ENCODE measurements at regions of chr20 and their contacts with region 1.

Region 1: DNA sequence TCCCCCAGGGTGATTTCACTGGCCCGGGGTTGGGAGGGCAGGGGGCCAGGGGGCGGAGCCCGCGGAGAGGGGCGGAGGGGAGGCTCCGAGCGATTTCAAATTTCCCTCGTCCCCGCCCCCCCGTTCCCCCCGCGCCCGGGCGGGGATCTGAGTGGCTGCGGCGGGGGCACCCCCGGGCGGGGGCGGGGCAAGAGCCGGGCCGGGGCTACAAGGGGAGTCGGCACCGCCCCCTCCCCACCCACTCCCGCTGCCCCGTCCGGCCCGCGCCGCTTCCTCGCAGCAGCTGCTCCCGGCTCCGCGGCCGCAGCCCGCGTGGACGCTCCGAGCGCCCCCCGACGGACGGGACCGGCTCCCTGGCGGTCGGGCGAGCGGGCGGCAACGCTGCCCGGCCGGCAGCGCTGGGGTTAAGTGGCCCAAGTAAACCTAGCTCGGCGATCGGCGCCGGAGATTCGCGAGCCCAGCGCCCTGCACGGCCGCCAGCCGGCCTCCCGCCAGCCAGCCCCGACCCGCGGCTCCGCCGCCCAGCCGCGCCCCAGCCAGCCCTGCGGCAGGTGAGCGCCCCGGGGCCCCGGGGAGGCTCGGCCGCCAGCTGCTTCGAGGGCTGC is at the start of gene DNMT3B:
- DNase-seq: peak; percentile 31 to 81 (median 66)
- ATAC-seq: peak; percentile 76
- H3K4me3 ChIP-seq: peak within 1 kb of the TSS; percentile 67
- H3K4me3 Mint-ChIP-seq: peak within 1 kb of the TSS; percentile 89
- H3K27ac ChIP-seq: no peak within 1 kb of the TSS
- H3K27ac Mint-ChIP-seq: no peak within 1 kb of the TSS
- H3K4me1 ChIP-seq: peaks cover 20% of the 10 kb centered on the region
- H3K4me1 Mint-ChIP-seq: peaks cover 13% of the 10 kb centered on the region
- H3K27me3 ChIP-seq: no peaks in the 10 kb centered on the region
- H3K27me3 Mint-ChIP-seq: no peaks in the 10 kb centered on the region
- CTCF ChIP-seq: no peak
- total RNA-seq, gene DNMT3B: 0.28 to 0.33 TPM

Region 2: GRCh38 chr20:32737371-32738223 is 24.7 kb before region 1 on chr20:
- CTCF ChIA-PET with region 1: interaction called, 4 read pairs
- POLR2A ChIA-PET with region 1: interaction called, 22 read pairs
- intact Hi-C with region 1: no loop called
- DNase-seq: peak in 9 of 14 experiments; percentile 13 to 80 (median 28)
- ATAC-seq: peak; percentile 91
- H3K4me3 ChIP-seq: no peak overlapping the region
- H3K4me3 Mint-ChIP-seq: peak overlapping the region; percentile 74
- H3K27ac ChIP-seq: peak overlapping the region; percentile 42 to 68
- H3K27ac Mint-ChIP-seq: peak overlapping the region; percentile 93
- H3K4me1 ChIP-seq: peaks cover 59% of the 10 kb centered on the region
- H3K4me1 Mint-ChIP-seq: peaks cover 54% of the 10 kb centered on the region
- H3K27me3 ChIP-seq: no peaks in the 10 kb centered on the region
- H3K27me3 Mint-ChIP-seq: no peaks in the 10 kb centered on the region
- CTCF ChIP-seq: no peak

Region 3: GRCh38 chr20:32743237-32744112 is 18.8 kb before region 1 on chr20 and contains the start of gene COMMD7:
- CTCF ChIA-PET with region 1: interaction called, 5 read pairs
- POLR2A ChIA-PET with region 1: interaction called, 22 read pairs
- intact Hi-C with region 1: loop called in 1 of 2 experiments (anchors 1 kb)
- DNase-seq: peak; percentile 45 to 83 (median 58)
- ATAC-seq: peak; percentile 75
- H3K4me3 ChIP-seq: peak within 1 kb of the TSS; percentile 88
- H3K4me3 Mint-ChIP-seq: peak within 1 kb of the TSS; percentile 94
- H3K27ac ChIP-seq: peak within 1 kb of the TSS; percentile 85 to 91
- H3K27ac Mint-ChIP-seq: peak within 1 kb of the TSS; percentile 96
- H3K4me1 ChIP-seq: peaks cover 38% of the 10 kb centered on the region
- H3K4me1 Mint-ChIP-seq: peaks cover 41% of the 10 kb centered on the region
- H3K27me3 ChIP-seq: no peaks in the 10 kb centered on the region
- H3K27me3 Mint-ChIP-seq: no peaks in the 10 kb centered on the region
- CTCF ChIP-seq: no peak
- total RNA-seq, gene COMMD7: 30.3 to 30.4 TPM

Region 4: GRCh38 chr20:32792316-32792715 is 30.1 kb after region 1 on chr20:
- CTCF ChIA-PET with region 1: no interaction called
- POLR2A ChIA-PET with region 1: no interaction called
- intact Hi-C with region 1: no loop called
- DNase-seq: peak in 9 of 14 experiments; percentile 9 to 80 (median 44)
- ATAC-seq: peak; percentile 58
- H3K4me3 ChIP-seq: no peak overlapping the region
- H3K4me3 Mint-ChIP-seq: no peak overlapping the region
- H3K27ac ChIP-seq: peak overlapping the region; percentile 38 to 65
- H3K27ac Mint-ChIP-seq: peak overlapping the region; percentile 94
- H3K4me1 ChIP-seq: peaks cover 61% of the 10 kb centered on the region
- H3K4me1 Mint-ChIP-seq: peaks cover 64% of the 10 kb centered on the region
- H3K27me3 ChIP-seq: no peaks in the 10 kb centered on the region
- H3K27me3 Mint-ChIP-seq: no peaks in the 10 kb centered on the region
- CTCF ChIP-seq: no peak